Heart left ventricle (tissue), 16 donors: ENCODE measurements at regions of chr11 and their contacts with region 1.

Region 1: GRCh38 chr11:93895106-93895862 is 44.9 kb upstream of the VSTM5 start:
- DNase-seq: peak in 1 of 5 donors; percentile 16
- ATAC-seq: peak in 3 of 4 donors; percentile 46 to 72 (median 66)
- H3K4me3 ChIP-seq: no peak overlapping the region
- H3K27ac ChIP-seq: no peak overlapping the region
- H3K4me1 ChIP-seq: no peaks in the 10 kb centered on the region
- H3K27me3 ChIP-seq: peaks cover 0 to 8% (median 0%) of the 10 kb centered on the region in 9 donors
- CTCF ChIP-seq: peak; percentile 45 to 80 (median 63)
- POLR2A ChIP-seq: no peak

Region 2: DNA sequence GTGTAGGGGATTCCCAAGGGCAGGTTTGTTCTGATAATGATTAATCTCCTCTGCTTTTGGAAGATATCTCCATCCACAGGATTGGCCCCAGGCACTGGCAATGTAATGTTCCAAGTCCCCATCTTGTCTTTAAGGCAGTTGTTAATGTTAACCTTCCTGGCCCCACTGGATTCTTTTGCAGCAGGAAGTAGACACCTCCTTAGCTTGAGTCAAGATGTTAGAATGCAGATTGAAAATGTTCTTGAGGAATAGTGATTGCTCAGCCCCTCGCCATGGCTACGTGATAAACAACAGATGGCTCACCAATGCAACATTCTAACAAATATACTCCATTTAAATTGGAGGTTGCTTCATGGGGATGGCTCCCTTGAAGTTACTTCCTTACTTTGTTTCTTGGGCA is 133.2 kb after region 1 on chr11:
- intact Hi-C with region 1: no loop called
- DNase-seq: no peak
- ATAC-seq: no peak
- H3K4me3 ChIP-seq: no peak overlapping the region
- H3K27ac ChIP-seq: no peak overlapping the region
- H3K4me1 ChIP-seq: peaks cover 0 to 9% (median 0%) of the 10 kb centered on the region in 12 donors
- H3K27me3 ChIP-seq: no peaks in the 10 kb centered on the region
- CTCF ChIP-seq: no peak
- POLR2A ChIP-seq: no peak

Region 3: GRCh38 chr11:94417386-94417987 is 522.2 kb after region 1 on chr11:
- intact Hi-C with region 1: loop called (anchors 2 to 10 kb)
- DNase-seq: no peak
- ATAC-seq: no peak
- H3K4me3 ChIP-seq: no peak overlapping the region
- H3K27ac ChIP-seq: no peak overlapping the region
- H3K4me1 ChIP-seq: peaks cover 0 to 3% (median 0%) of the 10 kb centered on the region in 12 donors
- H3K27me3 ChIP-seq: no peaks in the 10 kb centered on the region
- CTCF ChIP-seq: peak; percentile 31 to 70 (median 56)
- POLR2A ChIP-seq: no peak

Region 4: DNA sequence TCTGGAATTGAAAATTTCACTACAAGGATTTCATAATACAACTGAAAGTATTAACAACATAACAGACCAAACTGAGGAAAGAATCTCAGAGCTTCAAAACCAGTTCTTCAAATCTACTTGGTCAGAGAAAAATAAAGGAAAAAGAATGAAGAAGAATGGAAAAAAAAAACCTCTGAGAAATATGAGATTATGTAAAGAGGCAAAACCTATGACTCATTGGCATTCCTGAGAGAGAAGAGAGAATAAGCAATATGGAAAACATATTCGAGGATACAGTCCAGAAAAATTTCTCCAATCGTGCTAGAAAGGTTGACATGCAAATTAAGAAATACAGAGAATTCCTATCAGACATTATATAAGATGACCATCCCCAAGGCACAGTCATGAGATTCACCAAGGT is 529.4 kb after region 1 on chr11:
- intact Hi-C with region 1: loop called in 7 of 10 experiments (anchors 5 to 10 kb)
- DNase-seq: no peak
- ATAC-seq: no peak
- H3K4me3 ChIP-seq: no peak overlapping the region
- H3K27ac ChIP-seq: no peak overlapping the region
- H3K4me1 ChIP-seq: no peaks in the 10 kb centered on the region
- H3K27me3 ChIP-seq: no peaks in the 10 kb centered on the region
- CTCF ChIP-seq: no peak
- POLR2A ChIP-seq: no peak

Region 5: GRCh38 chr11:94493281-94494125 is 598.2 kb after region 1 on chr11 and contains the starts of genes ANKRD49 and MRE11:
- intact Hi-C with region 1: loop called in 1 of 10 experiments (anchors 5 kb)
- DNase-seq: peak; percentile 96 to 97 (median 96)
- ATAC-seq: peak; percentile 100
- H3K4me3 ChIP-seq: peak within 1 kb of the TSS; percentile 40 to 98 (median 85)
- H3K27ac ChIP-seq: peak within 1 kb of the TSS in 11 of 12 donors; percentile 36 to 85 (median 78)
- H3K4me1 ChIP-seq: peaks cover 0 to 33% (median 18%) of the 10 kb centered on the region in 12 donors
- H3K27me3 ChIP-seq: no peaks in the 10 kb centered on the region
- CTCF ChIP-seq: no peak
- POLR2A ChIP-seq: peak in 1 of 2 donors; percentile 66
- total RNA-seq, gene ANKRD49: 3.5 to 6.9 (median 5.7) TPM
- total RNA-seq, gene MRE11: 4.2 to 12.3 (median 8.4) TPM

Region 6: GRCh38 chr11:94504689-94505293 is 609.5 kb after region 1 on chr11:
- intact Hi-C with region 1: loop called in 8 of 10 experiments (anchors 2 to 10 kb)
- DNase-seq: no peak
- ATAC-seq: no peak
- H3K4me3 ChIP-seq: no peak overlapping the region
- H3K27ac ChIP-seq: no peak overlapping the region
- H3K4me1 ChIP-seq: no peaks in the 10 kb centered on the region
- H3K27me3 ChIP-seq: no peaks in the 10 kb centered on the region
- CTCF ChIP-seq: peak; percentile 50 to 80 (median 72)
- POLR2A ChIP-seq: no peak

Region 7: GRCh38 chr11:94602430-94603372 is 707.4 kb after region 1 on chr11:
- intact Hi-C with region 1: loop called in 3 of 10 experiments (anchors 5 to 10 kb)
- DNase-seq: peak in 4 of 5 donors; percentile 57 to 69 (median 58)
- ATAC-seq: peak in 3 of 4 donors; percentile 33 to 93 (median 51)
- H3K4me3 ChIP-seq: no peak overlapping the region
- H3K27ac ChIP-seq: peak overlapping the region in 1 of 12 donors; percentile 72
- H3K4me1 ChIP-seq: peaks cover 0 to 15% (median 0%) of the 10 kb centered on the region in 12 donors
- H3K27me3 ChIP-seq: no peaks in the 10 kb centered on the region
- CTCF ChIP-seq: peak in 6 of 12 donors; percentile 30 to 69 (median 56)
- POLR2A ChIP-seq: no peak